ENCODE measurements at regions of chr7 and their contacts with region 1.

Region 1: DNA sequence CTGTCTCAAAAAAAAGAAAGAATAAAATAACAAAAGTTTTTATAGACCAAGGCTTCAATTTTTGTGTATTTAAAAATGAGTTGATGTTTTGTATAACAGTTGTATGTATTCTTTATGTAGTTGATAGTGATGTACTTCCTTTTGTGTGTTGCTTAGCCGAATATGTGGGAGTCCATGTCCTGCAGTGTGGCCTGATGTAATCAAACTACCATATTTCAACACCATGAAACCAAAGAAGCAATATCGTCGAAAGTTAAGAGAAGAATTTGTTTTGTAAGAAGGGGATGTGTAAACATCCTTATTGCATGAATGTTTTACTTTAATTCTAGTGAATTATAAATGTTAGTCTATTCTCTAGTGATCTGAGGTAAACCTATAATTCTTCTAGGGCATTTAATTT is 56.6 kb downstream of the MPLKIP start:
- DNase-seq: no peak
- H3K4me3 Mint-ChIP-seq: no peak overlapping the region
- H3K27ac Mint-ChIP-seq: peak overlapping the region; percentile 59
- H3K4me1 Mint-ChIP-seq: no peaks in the 10 kb centered on the region
- H3K27me3 Mint-ChIP-seq: no peaks in the 10 kb centered on the region

Region 2: DNA sequence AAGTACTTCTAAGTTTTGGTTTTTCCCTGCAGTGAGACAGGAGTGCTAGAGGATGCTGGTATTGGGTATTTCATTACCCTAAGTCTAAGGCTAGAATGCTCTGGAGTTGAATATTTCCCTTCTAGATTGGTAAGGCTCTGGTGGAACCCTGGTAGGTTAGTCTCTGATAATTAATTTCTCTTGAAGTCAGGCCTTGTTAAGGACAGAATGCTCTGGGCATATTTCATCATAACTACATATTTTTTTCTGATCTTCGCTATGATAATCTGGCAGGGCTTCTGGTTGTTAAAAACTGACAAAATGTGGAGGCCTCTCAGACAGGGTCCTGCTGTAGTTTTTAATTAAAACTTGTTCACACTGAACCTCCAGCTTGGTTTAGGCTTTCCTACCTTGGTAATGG is 44.0 kb before region 1 on chr7:
- CTCF ChIA-PET with region 1: interaction called, 3 read pairs
- intact Hi-C with region 1: loop called (anchors 2 kb)
- DNase-seq: no peak
- H3K4me3 Mint-ChIP-seq: no peak overlapping the region
- H3K27ac Mint-ChIP-seq: no peak overlapping the region
- H3K4me1 Mint-ChIP-seq: peaks cover 16% of the 10 kb centered on the region
- H3K27me3 Mint-ChIP-seq: no peaks in the 10 kb centered on the region

Region 3: DNA sequence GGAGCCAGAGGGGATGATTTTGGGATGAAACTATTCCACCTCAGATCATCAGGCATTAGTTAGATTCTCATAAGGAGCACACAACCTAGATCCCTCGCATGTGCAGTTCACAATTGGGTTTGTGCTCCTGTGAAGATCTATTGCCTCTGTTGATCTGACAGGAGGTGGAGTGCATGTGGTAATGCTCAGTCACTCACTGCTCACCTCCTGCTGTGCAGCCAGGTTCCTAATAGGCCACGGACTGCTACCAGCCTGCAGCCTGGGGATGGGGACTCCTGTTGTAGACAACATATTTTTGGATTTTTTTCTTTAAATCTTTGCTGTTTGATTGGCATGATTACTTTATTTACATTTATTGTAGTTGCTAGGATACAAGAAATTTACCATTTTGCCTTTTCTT is 860.0 kb after region 1 on chr7:
- CTCF ChIA-PET with region 1: no interaction called
- intact Hi-C with region 1: no loop called
- DNase-seq: no peak
- H3K4me3 Mint-ChIP-seq: no peak overlapping the region
- H3K27ac Mint-ChIP-seq: no peak overlapping the region
- H3K4me1 Mint-ChIP-seq: no peaks in the 10 kb centered on the region
- H3K27me3 Mint-ChIP-seq: no peaks in the 10 kb centered on the region

Measured in activated naive CD4-positive, alpha-beta T cell treated with anti-CD3 and anti-CD28 coated beads for 36 hours (primary cell).